HepG2 (cell line): ENCODE measurements at regions of chr11 and their contacts with region 1.

Region 1: GRCh38 chr11:4187055-4187988 is 92.7 kb downstream of the RRM1 start:
- DNase-seq: peak; percentile 39
- ATAC-seq: peak; percentile 95
- H3K4me3 ChIP-seq: peak overlapping the region; percentile 59 to 75 (median 74)
- H3K27ac ChIP-seq: no peak overlapping the region
- H3K4me1 ChIP-seq: peaks cover 5% of the 10 kb centered on the region; the same call in 1 of the 2 replicates
- H3K27me3 ChIP-seq: peaks cover 9 to 53% of the 10 kb centered on the region in 2 experiments
- CTCF ChIP-seq: peak; percentile 96
- EP300 ChIP-seq: no peak
- POLR2A ChIP-seq: no peak
- RAD21 ChIP-seq: peak; percentile 97

Region 2: GRCh38 chr11:4164884-4165590 is 22.3 kb before region 1 on chr11:
- CTCF ChIA-PET with region 1: no interaction called
- POLR2A ChIA-PET with region 1: no interaction called
- in situ Hi-C with region 1: no loop called
- intact Hi-C with region 1: no loop called
- DNase-seq: no peak
- ATAC-seq: no peak
- H3K4me3 ChIP-seq: no peak overlapping the region
- H3K27ac ChIP-seq: no peak overlapping the region
- H3K4me1 ChIP-seq: no peaks in the 10 kb centered on the region
- H3K27me3 ChIP-seq: peaks cover 0 to 8% of the 10 kb centered on the region in 2 experiments; a peak in 1 of 5 replicates
- CTCF ChIP-seq: no peak
- EP300 ChIP-seq: no peak
- POLR2A ChIP-seq: no peak
- RAD21 ChIP-seq: no peak

Region 3: GRCh38 chr11:4493480-4493818 is 306.1 kb after region 1 on chr11:
- CTCF ChIA-PET with region 1: interaction called, 32 read pairs
- POLR2A ChIA-PET with region 1: no interaction called
- in situ Hi-C with region 1: loop called (anchors 5 kb)
- intact Hi-C with region 1: loop called (anchors 1 kb)
- DNase-seq: no peak
- ATAC-seq: no peak
- H3K4me3 ChIP-seq: no peak overlapping the region
- H3K27ac ChIP-seq: no peak overlapping the region
- H3K4me1 ChIP-seq: no peaks in the 10 kb centered on the region
- H3K27me3 ChIP-seq: peaks cover 0 to 44% of the 10 kb centered on the region in 2 experiments; a peak in 4 of 5 replicates
- CTCF ChIP-seq: no peak
- EP300 ChIP-seq: no peak
- POLR2A ChIP-seq: no peak
- RAD21 ChIP-seq: no peak

Region 4: GRCh38 chr11:4539603-4540219 is 352.4 kb after region 1 on chr11:
- CTCF ChIA-PET with region 1: interaction called, 29 read pairs
- POLR2A ChIA-PET with region 1: no interaction called
- in situ Hi-C with region 1: loop called (anchors 5 kb)
- intact Hi-C with region 1: loop called (anchors 1 kb)
- DNase-seq: peak; percentile 18
- ATAC-seq: peak; percentile 84
- H3K4me3 ChIP-seq: no peak overlapping the region
- H3K27ac ChIP-seq: no peak overlapping the region
- H3K4me1 ChIP-seq: no peaks in the 10 kb centered on the region
- H3K27me3 ChIP-seq: no peaks in the 10 kb centered on the region; a peak in 1 of 5 replicates
- CTCF ChIP-seq: peak; percentile 66
- EP300 ChIP-seq: no peak
- POLR2A ChIP-seq: no peak
- RAD21 ChIP-seq: peak; percentile 37; the same call in 1 of the 2 replicates

Region 5: GRCh38 chr11:4551346-4551979 is 364.1 kb after region 1 on chr11:
- CTCF ChIA-PET with region 1: interaction called, 7 read pairs
- POLR2A ChIA-PET with region 1: no interaction called
- in situ Hi-C with region 1: no loop called
- intact Hi-C with region 1: loop called (anchors 1 kb)
- DNase-seq: peak; percentile 7
- ATAC-seq: peak; percentile 75
- H3K4me3 ChIP-seq: no peak overlapping the region
- H3K27ac ChIP-seq: no peak overlapping the region
- H3K4me1 ChIP-seq: peaks cover 7% of the 10 kb centered on the region; the same call in 1 of the 2 replicates
- H3K27me3 ChIP-seq: peaks cover 0 to 3% of the 10 kb centered on the region in 2 experiments; a peak in 1 of 5 replicates
- CTCF ChIP-seq: peak; percentile 28
- EP300 ChIP-seq: no peak
- POLR2A ChIP-seq: no peak
- RAD21 ChIP-seq: no peak

Region 6: GRCh38 chr11:5004424-5005274 is 817.3 kb after region 1 on chr11:
- CTCF ChIA-PET with region 1: no interaction called
- POLR2A ChIA-PET with region 1: no interaction called
- in situ Hi-C with region 1: loop called (anchors 10 kb)
- intact Hi-C with region 1: loop called (anchors 2 kb)
- DNase-seq: peak; percentile 36
- ATAC-seq: no peak
- H3K4me3 ChIP-seq: no peak overlapping the region
- H3K27ac ChIP-seq: no peak overlapping the region
- H3K4me1 ChIP-seq: no peaks in the 10 kb centered on the region
- H3K27me3 ChIP-seq: no peaks in the 10 kb centered on the region
- CTCF ChIP-seq: peak; percentile 65
- EP300 ChIP-seq: no peak
- POLR2A ChIP-seq: no peak
- RAD21 ChIP-seq: no peak